Activated CD4-positive, alpha-beta memory T cell treated with anti-CD3 and anti-CD28 coated beads for 36 hours (primary cell): ENCODE measurements at regions of chr12 and their contacts with region 1.

Region 1: DNA sequence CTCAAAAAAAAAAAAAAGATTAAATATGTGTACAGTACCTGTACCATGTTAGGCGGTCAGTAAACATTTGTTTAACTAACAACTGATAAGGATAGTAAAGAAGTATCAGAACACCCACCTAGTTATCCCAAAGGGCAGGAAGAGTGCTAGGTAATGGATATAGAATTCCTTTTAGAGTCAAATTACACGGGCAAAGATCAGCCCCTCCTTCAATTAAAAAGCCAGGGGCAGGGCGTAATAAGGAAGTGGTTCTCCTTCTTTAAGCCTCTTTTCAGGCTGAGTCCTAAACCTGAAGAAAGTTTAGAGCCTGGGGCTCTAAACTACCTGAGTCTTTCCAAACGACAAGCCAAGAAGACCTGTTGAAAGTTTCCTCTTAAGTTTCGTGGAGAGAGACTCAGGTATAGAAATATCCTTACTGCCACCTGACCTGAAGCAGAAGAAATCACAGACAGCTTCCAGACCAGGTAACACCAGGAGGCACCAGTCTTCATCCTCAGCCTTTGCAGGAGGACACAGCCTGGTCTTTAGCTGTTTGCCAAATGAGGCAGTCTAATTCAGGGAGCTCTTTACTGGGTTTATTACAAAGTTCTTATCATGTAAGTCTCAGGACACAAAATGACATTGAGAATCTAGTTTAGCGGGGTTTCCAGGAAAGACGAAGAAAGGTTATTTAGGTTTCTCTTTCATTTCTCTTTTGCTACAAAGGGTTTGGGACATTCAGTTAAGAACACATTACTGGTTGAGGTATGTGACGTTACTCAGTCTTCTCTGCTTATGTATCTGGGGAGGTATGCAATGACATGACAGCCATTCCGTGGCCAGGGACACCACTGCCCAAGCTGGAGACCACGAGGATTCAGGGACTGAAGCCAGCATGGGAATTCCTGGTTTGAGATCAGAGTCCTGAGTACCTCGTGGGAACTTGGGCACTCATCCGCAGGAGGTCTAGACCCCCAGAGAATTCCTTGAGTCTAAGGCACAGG is at the start of gene BCL2L14:
- DNase-seq: peak; percentile 50
- H3K4me3 Mint-ChIP-seq: peak within 1 kb of the TSS; percentile 83
- H3K27ac Mint-ChIP-seq: peak within 1 kb of the TSS; percentile 92
- H3K4me1 Mint-ChIP-seq: peaks cover 35% of the 10 kb centered on the region
- H3K27me3 Mint-ChIP-seq: no peaks in the 10 kb centered on the region
- total RNA-seq, gene BCL2L14: 11.5 to 12.7 TPM

Region 2: GRCh38 chr12:11581179-11581755 is 489.7 kb before region 1 on chr12:
- CTCF ChIA-PET with region 1: interaction called, 6 read pairs
- POLR2A ChIA-PET with region 1: no interaction called
- intact Hi-C with region 1: loop called (anchors 1 kb)
- DNase-seq: peak; percentile 63
- H3K4me3 Mint-ChIP-seq: no peak overlapping the region
- H3K27ac Mint-ChIP-seq: no peak overlapping the region
- H3K4me1 Mint-ChIP-seq: peaks cover 23% of the 10 kb centered on the region
- H3K27me3 Mint-ChIP-seq: peaks cover 2% of the 10 kb centered on the region

Region 3: DNA sequence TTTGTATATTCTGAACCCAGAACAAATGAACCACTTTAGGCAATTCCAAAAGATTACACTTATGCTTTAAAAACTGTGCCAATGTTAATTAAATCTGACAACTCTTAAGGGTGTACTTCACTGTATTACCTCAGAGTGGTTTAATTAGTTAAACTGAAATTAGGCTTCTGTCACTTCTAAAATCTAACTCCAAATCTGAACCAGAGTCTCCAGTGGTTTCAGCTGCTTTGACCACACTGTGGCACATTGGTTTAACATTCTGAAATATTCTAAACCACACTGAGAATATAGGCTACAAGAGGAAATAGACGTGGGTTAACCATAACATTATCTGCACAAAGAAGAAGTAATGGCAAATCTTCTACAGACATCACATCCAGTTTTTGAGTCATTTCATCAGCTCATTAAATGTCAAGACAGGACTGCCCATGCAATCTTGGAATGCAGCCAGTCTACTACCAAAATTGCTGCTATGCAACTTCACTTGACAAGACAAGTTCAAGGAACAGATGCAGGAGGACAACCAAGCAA is 101.1 kb after region 1 on chr12:
- CTCF ChIA-PET with region 1: no interaction called
- POLR2A ChIA-PET with region 1: no interaction called
- intact Hi-C with region 1: loop called (anchors 2 kb)
- DNase-seq: peak; percentile 49
- H3K4me3 Mint-ChIP-seq: no peak overlapping the region
- H3K27ac Mint-ChIP-seq: no peak overlapping the region
- H3K4me1 Mint-ChIP-seq: peaks cover 12% of the 10 kb centered on the region
- H3K27me3 Mint-ChIP-seq: peaks cover 11% of the 10 kb centered on the region

Region 4: GRCh38 chr12:12214635-12215131 is 143.7 kb after region 1 on chr12:
- CTCF ChIA-PET with region 1: no interaction called
- POLR2A ChIA-PET with region 1: no interaction called
- intact Hi-C with region 1: no loop called
- DNase-seq: no peak
- H3K4me3 Mint-ChIP-seq: no peak overlapping the region
- H3K27ac Mint-ChIP-seq: no peak overlapping the region
- H3K4me1 Mint-ChIP-seq: peaks cover 13% of the 10 kb centered on the region
- H3K27me3 Mint-ChIP-seq: peaks cover 5% of the 10 kb centered on the region

Region 5: GRCh38 chr12:12266873-12267741 is 196.1 kb after region 1 on chr12 and contains the start of gene LRP6:
- CTCF ChIA-PET with region 1: no interaction called
- POLR2A ChIA-PET with region 1: no interaction called
- intact Hi-C with region 1: loop called (anchors 10 kb)
- DNase-seq: peak; percentile 81
- H3K4me3 Mint-ChIP-seq: peak within 1 kb of the TSS; percentile 83
- H3K27ac Mint-ChIP-seq: peak within 1 kb of the TSS; percentile 8
- H3K4me1 Mint-ChIP-seq: peaks cover 13% of the 10 kb centered on the region
- H3K27me3 Mint-ChIP-seq: peaks cover 22% of the 10 kb centered on the region
- total RNA-seq, gene LRP6: 2.5 to 2.6 TPM